Motor neuron (in vitro differentiated cells): ENCODE measurements at regions of chr17 and their contacts with region 1.

Region 1: GRCh38 chr17:70375406-70375805 is 206.1 kb downstream of the KCNJ2 start:
- ATAC-seq: no peak
- H3K4me3 ChIP-seq: no peak overlapping the region
- H3K27ac ChIP-seq: no peak overlapping the region
- H3K4me1 ChIP-seq: no peaks in the 10 kb centered on the region

Region 2: DNA sequence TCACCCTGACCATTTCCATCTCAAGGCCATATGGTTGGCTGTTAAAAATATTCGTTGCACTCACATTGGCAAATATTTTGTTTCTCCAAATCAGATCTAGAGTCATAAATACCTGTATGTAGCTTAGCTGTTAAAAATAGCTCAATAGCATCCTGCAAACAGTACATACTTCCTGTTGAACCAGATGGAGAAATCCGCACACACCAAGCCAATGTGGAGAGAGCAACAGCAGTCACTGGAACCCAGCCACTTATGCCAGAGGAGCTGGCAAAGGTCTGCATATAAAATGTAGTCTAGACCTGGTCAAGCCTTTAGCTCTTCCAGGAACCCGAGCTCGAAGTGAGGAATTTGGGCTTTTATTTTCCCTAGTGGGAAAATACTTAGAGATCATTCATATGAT is 446.8 kb before region 1 on chr17:
- in situ Hi-C with region 1: no loop called
- ATAC-seq: no peak
- H3K4me3 ChIP-seq: no peak overlapping the region
- H3K27ac ChIP-seq: no peak overlapping the region
- H3K4me1 ChIP-seq: no peaks in the 10 kb centered on the region

Region 3: GRCh38 chr17:70295731-70296130 is 79.7 kb before region 1 on chr17:
- in situ Hi-C with region 1: loop called in 1 of 9 experiments (anchors 25 kb)
- ATAC-seq: no peak
- H3K4me3 ChIP-seq: no peak overlapping the region
- H3K27ac ChIP-seq: no peak overlapping the region
- H3K4me1 ChIP-seq: no peaks in the 10 kb centered on the region

Region 4: DNA sequence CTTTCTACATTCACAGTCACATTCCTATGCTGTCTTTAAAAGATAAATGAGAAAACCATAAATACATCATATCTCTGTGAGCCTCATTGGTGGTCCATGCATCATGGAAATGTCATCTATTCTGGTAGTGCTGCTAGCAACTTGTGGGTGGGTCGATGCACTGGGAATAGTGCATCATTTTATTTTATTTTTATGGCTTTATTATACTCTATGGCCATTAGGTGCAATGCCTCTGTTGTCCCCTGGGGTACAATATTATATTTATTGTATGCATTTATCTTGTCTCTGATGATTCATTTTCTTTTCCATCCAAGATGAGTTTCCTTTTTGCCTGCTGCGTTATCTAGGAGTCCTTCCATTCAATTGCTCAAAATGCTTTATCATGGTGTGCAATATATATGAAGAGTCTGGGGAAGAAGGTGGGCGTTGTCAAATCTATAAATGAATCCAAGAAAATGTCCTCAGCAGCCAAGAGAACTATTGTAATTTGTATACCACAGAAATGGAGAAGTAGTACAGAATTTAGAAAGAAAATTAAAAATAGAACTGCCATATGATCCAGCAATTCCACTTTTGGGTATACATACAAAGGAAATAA is 118.0 kb after region 1 on chr17:
- in situ Hi-C with region 1: no loop called
- ATAC-seq: peak in 4 of 8 experiments; percentile 16 to 93 (median 87)
- H3K4me3 ChIP-seq: no peak overlapping the region
- H3K27ac ChIP-seq: no peak overlapping the region
- H3K4me1 ChIP-seq: peaks cover 0 to 4% of the 10 kb centered on the region in 2 donors